Heart left ventricle (tissue), 16 donors: ENCODE measurements at regions of chr1 and their contacts with region 1.

Region 1: DNA sequence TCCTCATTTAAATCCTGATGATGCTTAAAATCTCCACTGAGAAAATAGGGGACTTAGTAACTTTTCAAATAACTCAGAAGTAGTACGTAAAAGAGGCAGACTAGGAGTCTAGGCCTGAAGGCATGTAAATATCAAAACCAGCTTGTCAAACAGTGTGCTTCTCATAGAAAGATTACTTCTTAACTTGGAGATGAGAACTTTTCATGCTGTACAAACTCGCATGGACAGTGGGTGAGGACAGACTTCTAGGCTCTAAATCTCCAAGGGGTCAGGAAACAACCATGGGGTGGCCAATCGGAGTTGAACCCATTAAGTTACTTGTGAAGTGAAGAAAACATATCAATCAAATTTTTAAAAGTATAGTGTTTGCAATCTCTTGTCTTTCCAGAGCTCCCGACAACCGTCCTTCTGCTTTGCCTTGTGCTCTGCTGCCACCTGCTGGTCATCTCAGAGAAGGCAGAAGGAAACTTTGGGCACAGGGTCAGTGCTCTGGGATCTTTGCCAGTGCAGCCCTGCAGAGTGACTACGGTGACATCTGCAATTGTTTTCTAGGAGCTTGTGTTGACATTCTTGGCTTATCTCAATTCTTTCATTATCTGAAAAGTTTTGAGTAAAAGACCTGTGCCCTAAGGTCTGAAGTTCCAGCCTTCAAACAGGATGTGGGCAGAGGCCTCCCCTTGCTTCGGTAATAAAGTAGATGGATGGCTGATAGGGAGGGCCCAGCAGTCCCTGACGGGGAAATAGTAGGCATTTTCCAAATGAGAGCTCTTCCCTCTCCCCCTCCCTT is 105.1 kb upstream of the PDE4B start:
- DNase-seq: peak; percentile 75 to 89 (median 83)
- ATAC-seq: peak; percentile 64 to 90 (median 86)
- H3K4me3 ChIP-seq: no peak overlapping the region
- H3K27ac ChIP-seq: no peak overlapping the region
- H3K4me1 ChIP-seq: peaks cover 0 to 31% (median 19%) of the 10 kb centered on the region in 12 donors
- H3K27me3 ChIP-seq: peaks cover 0 to 5% (median 0%) of the 10 kb centered on the region in 9 donors
- CTCF ChIP-seq: peak; percentile 92 to 99 (median 96)
- POLR2A ChIP-seq: no peak

Region 2: DNA sequence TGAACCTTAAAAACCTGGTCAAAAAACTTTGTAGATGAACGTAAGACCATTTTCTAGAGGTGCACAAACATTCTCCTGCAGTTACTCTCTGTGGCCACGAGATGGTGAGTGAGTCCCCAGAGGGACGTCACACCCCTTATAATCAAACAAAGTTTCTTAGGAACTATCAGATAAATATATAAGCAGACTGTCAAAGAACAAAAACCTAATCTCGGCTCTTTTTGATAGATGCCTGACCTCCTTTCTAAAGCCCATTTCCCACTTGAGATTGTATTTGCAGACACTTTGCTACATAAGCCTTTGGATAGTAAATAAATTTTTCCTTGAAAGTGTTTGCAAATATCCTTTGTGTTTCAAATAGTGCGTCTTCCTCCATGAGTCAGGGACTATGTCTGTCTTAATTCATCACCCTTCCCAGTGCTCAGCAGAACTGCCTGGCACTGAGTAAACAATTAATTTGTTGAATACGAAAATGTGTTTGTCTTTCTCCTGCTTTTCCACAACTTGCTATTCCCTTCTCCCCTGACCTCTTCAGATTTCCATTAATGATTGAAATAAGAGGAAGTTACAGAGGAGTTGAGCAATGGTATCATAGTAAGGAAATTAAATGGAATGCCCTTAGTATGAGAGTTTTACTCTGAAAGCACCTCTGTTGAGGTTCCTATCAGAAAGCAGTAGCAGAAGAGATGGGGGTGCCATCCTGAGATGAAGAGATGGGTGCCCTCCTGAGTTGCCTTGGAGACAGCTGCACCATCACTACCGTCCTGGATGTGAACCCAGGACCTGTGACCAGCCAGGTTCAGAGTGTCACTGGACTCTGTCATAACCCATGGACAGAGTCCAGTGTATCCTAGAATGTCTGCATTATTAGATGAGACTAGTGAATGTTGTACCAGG is 1000.5 kb before region 1 on chr1:
- intact Hi-C with region 1: loop called in 1 of 10 experiments (anchors 10 kb)
- DNase-seq: no peak
- ATAC-seq: peak in 3 of 4 donors; percentile 64 to 79 (median 75)
- H3K4me3 ChIP-seq: no peak overlapping the region
- H3K27ac ChIP-seq: no peak overlapping the region
- H3K4me1 ChIP-seq: peaks cover 0 to 17% (median 8%) of the 10 kb centered on the region in 12 donors
- H3K27me3 ChIP-seq: no peaks in the 10 kb centered on the region
- CTCF ChIP-seq: peak; percentile 77 to 92 (median 86)
- POLR2A ChIP-seq: no peak

Region 3: GRCh38 chr1:65067491-65068201 is 620.0 kb before region 1 on chr1:
- intact Hi-C with region 1: loop called in 5 of 10 experiments (anchors 5 to 10 kb)
- DNase-seq: peak; percentile 72 to 85 (median 81)
- ATAC-seq: peak; percentile 45 to 63 (median 58)
- H3K4me3 ChIP-seq: peak overlapping the region; percentile 71 to 98 (median 88)
- H3K27ac ChIP-seq: peak overlapping the region; percentile 95 to 100 (median 99)
- H3K4me1 ChIP-seq: peaks cover 0 to 43% (median 31%) of the 10 kb centered on the region in 12 donors
- H3K27me3 ChIP-seq: no peaks in the 10 kb centered on the region
- CTCF ChIP-seq: no peak
- POLR2A ChIP-seq: peak in 1 of 2 donors; percentile 65

Region 4: GRCh38 chr1:65209005-65209885 is 478.4 kb before region 1 on chr1:
- intact Hi-C with region 1: loop called in 1 of 10 experiments (anchors 5 kb)
- DNase-seq: peak in 1 of 5 donors; percentile 39
- ATAC-seq: peak; percentile 25 to 73 (median 58)
- H3K4me3 ChIP-seq: no peak overlapping the region
- H3K27ac ChIP-seq: peak overlapping the region in 2 of 12 donors; percentile 35 to 49
- H3K4me1 ChIP-seq: peaks cover 0 to 23% (median 14%) of the 10 kb centered on the region in 12 donors
- H3K27me3 ChIP-seq: no peaks in the 10 kb centered on the region
- CTCF ChIP-seq: peak; percentile 58 to 81 (median 68)
- POLR2A ChIP-seq: no peak

Region 5: DNA sequence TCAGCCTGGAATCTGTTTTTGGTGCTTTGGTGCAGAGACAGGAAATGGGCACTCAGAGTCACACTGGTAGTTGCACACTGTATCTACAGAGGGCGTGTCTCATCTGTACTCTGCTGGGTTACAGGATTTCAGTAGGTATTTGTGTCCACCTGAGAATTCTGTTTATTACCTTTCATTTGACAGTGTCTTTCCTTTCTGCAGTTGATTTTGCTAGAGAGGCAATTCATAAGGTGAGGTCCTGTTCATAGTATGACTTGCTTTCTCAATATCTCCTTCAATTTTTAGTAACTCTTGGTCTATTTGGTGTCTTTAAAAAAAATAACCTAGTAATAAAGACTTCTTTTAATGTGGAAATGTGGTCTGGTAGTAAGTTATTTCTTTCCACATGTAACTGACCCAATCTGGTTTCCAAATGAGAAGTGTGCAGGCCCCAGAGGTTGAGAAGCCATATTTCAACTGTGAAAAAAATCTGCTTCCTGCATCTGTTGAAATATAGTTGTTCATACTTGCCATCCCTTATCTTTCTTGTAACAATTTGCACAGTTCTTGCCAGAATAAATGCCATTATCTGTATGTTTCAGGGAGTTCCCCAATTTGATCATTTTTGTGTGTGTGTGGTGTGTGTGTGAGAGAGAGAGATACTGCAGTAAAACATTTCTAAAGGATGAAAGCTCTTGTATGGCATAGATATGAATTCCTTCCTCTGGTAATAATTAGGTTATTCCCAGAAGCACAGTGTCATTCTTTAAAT is 456.7 kb before region 1 on chr1:
- intact Hi-C with region 1: loop called (anchors 1 to 5 kb)
- DNase-seq: no peak
- ATAC-seq: no peak
- H3K4me3 ChIP-seq: no peak overlapping the region
- H3K27ac ChIP-seq: no peak overlapping the region
- H3K4me1 ChIP-seq: peaks cover 0 to 12% (median 0%) of the 10 kb centered on the region in 12 donors
- H3K27me3 ChIP-seq: no peaks in the 10 kb centered on the region
- CTCF ChIP-seq: no peak
- POLR2A ChIP-seq: no peak

Region 6: DNA sequence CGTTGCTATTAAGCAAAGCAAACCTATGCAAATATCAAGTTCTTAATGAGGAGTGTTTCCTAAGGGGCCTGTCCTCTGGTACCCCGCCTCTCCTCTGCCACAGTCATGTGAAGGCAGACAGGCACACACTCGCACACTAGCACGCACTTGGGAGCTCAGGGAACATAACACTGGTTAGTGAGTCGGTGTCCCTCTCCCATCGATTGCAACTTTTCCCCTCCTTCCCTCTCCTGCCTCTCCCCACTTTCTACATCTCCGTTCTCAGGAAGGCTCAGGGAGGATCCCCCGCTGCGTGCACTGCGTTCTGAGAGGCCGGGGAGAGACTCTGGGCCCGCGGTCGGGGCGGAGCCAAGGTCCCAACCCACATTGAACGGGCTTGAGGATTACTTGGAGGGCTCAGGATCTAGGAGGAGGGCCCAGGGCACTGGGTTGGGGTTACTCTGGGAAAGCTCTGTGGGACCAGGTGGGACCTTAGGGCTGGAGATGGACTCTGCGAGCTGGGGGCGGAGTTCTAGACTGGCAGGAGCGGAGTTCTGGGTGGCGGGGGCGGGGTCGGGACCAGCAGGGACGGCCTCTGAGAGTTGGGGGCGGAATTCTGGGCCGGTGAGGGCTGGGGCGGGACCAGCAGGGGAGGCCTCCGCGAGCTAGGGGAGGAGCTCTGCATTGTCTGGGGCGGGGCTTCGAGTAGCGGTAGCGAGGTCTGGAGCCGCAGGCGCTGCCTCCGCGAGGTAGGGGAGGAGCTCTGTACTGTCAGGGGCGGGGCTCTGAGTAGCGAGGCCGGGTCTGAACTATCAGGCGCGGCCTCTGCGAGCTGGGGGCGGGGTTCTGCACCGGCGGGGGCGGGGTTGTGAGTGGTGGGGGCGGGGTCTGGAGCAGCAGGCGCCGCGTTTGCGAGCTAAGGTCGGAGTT is 267.7 kb before region 1 on chr1:
- intact Hi-C with region 1: loop called in 1 of 10 experiments (anchors 10 kb)
- DNase-seq: peak; percentile 98 to 99 (median 99)
- ATAC-seq: peak; percentile 97 to 99 (median 98)
- H3K4me3 ChIP-seq: peak overlapping the region; percentile 36 to 98 (median 80)
- H3K27ac ChIP-seq: peak overlapping the region; percentile 92 to 99 (median 97)
- H3K4me1 ChIP-seq: peaks cover 0 to 45% (median 27%) of the 10 kb centered on the region in 12 donors
- H3K27me3 ChIP-seq: no peaks in the 10 kb centered on the region
- CTCF ChIP-seq: no peak
- POLR2A ChIP-seq: peak in 1 of 2 donors; percentile 38

Region 7: GRCh38 chr1:65734979-65735378 is 47.4 kb after region 1 on chr1:
- intact Hi-C with region 1: no loop called
- DNase-seq: no peak
- ATAC-seq: no peak
- H3K4me3 ChIP-seq: no peak overlapping the region
- H3K27ac ChIP-seq: no peak overlapping the region
- H3K4me1 ChIP-seq: no peaks in the 10 kb centered on the region
- H3K27me3 ChIP-seq: no peaks in the 10 kb centered on the region
- CTCF ChIP-seq: no peak
- POLR2A ChIP-seq: no peak